Caco-2 (cell line): ENCODE measurements at regions of chr1 and their contacts with region 1.

Region 1: GRCh38 chr1:245396615-245397014 is 241.8 kb downstream of the KIF26B start:
- DNase-seq: no peak
- H3K4me3 ChIP-seq: no peak overlapping the region
- H3K4me3 Mint-ChIP-seq: no peak overlapping the region
- H3K27ac Mint-ChIP-seq: no peak overlapping the region
- H3K4me1 ChIP-seq: peaks cover 56% of the 10 kb centered on the region
- H3K4me1 Mint-ChIP-seq: peaks cover 33% of the 10 kb centered on the region
- H3K27me3 ChIP-seq: no peaks in the 10 kb centered on the region
- H3K27me3 Mint-ChIP-seq: no peaks in the 10 kb centered on the region
- CTCF ChIP-seq: no peak

Region 2: DNA sequence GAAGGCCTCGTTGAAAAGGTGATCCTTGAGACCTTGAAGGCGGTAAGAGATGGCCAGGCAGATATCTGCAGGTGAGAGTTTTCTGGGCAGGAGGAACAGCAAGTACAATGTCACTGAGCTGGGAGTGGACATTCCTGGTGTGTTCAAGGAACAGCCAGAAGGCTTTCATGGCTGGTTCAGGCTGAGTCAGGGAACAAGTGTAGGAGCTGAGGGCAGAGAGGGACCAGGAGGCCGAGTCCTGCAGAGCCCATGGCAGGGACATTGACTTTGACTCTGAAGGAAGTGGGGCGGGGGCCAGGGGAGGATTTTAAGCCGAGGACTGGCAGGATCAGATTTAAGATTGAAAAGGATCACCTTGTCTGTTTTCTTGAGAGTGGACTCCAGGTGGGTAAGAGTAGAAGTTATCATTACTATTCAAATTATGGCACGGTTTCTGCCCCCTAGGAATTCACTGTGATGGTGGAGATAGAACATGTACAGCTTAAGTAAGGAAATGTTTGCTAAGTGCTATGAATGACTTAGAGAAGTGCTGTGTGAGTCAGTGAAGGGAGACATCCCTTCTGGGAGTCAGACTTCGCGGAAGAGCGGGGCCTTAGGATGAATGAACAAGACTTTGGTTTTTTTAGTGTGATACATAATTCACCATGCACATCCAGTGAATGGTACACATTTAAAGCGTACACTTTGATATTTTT is 39.6 kb before region 1 on chr1:
- CTCF ChIA-PET with region 1: no interaction called
- POLR2A ChIA-PET with region 1: no interaction called
- intact Hi-C with region 1: no loop called
- DNase-seq: no peak
- H3K4me3 ChIP-seq: no peak overlapping the region
- H3K4me3 Mint-ChIP-seq: no peak overlapping the region
- H3K27ac Mint-ChIP-seq: no peak overlapping the region
- H3K4me1 ChIP-seq: no peaks in the 10 kb centered on the region
- H3K4me1 Mint-ChIP-seq: peaks cover 7% of the 10 kb centered on the region
- H3K27me3 ChIP-seq: no peaks in the 10 kb centered on the region
- H3K27me3 Mint-ChIP-seq: no peaks in the 10 kb centered on the region
- CTCF ChIP-seq: no peak

Region 3: GRCh38 chr1:245411245-245412036 is 14.8 kb after region 1 on chr1:
- CTCF ChIA-PET with region 1: no interaction called
- POLR2A ChIA-PET with region 1: no interaction called
- intact Hi-C with region 1: loop called (anchors 1 kb)
- DNase-seq: no peak
- H3K4me3 ChIP-seq: no peak overlapping the region
- H3K4me3 Mint-ChIP-seq: no peak overlapping the region
- H3K27ac Mint-ChIP-seq: peak overlapping the region; percentile 4
- H3K4me1 ChIP-seq: peaks cover 69% of the 10 kb centered on the region
- H3K4me1 Mint-ChIP-seq: peaks cover 49% of the 10 kb centered on the region
- H3K27me3 ChIP-seq: no peaks in the 10 kb centered on the region
- H3K27me3 Mint-ChIP-seq: no peaks in the 10 kb centered on the region
- CTCF ChIP-seq: no peak

Region 4: GRCh38 chr1:245441689-245442088 is 45.1 kb after region 1 on chr1:
- CTCF ChIA-PET with region 1: no interaction called
- POLR2A ChIA-PET with region 1: no interaction called
- intact Hi-C with region 1: no loop called
- DNase-seq: no peak
- H3K4me3 ChIP-seq: no peak overlapping the region
- H3K4me3 Mint-ChIP-seq: no peak overlapping the region
- H3K27ac Mint-ChIP-seq: no peak overlapping the region
- H3K4me1 ChIP-seq: no peaks in the 10 kb centered on the region
- H3K4me1 Mint-ChIP-seq: no peaks in the 10 kb centered on the region
- H3K27me3 ChIP-seq: no peaks in the 10 kb centered on the region
- H3K27me3 Mint-ChIP-seq: no peaks in the 10 kb centered on the region
- CTCF ChIP-seq: no peak

Region 5: DNA sequence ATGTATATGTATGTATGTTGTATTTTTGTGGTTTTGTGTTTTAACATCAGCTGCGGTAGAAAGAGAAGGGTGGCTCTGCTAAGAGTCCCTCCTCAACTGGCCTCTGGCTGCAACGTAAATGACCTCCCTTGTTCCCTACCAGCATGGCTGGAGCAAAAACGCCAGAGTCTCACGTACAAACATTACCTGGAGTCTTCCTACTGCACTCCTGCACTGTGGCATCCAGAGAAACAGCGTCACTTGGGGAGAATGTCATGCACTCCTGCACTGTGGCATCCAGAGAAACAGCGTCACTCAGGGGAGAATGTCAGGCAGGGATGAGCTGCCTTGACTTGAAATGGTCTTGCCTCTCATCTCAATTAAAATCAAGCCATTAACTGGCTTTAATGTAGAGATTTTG is 72.4 kb after region 1 on chr1:
- CTCF ChIA-PET with region 1: no interaction called
- POLR2A ChIA-PET with region 1: no interaction called
- intact Hi-C with region 1: loop called (anchors 1 kb)
- DNase-seq: no peak
- H3K4me3 ChIP-seq: no peak overlapping the region
- H3K4me3 Mint-ChIP-seq: no peak overlapping the region
- H3K27ac Mint-ChIP-seq: no peak overlapping the region
- H3K4me1 ChIP-seq: peaks cover 21% of the 10 kb centered on the region
- H3K4me1 Mint-ChIP-seq: peaks cover 34% of the 10 kb centered on the region
- H3K27me3 ChIP-seq: no peaks in the 10 kb centered on the region
- H3K27me3 Mint-ChIP-seq: no peaks in the 10 kb centered on the region
- CTCF ChIP-seq: no peak

Region 6: DNA sequence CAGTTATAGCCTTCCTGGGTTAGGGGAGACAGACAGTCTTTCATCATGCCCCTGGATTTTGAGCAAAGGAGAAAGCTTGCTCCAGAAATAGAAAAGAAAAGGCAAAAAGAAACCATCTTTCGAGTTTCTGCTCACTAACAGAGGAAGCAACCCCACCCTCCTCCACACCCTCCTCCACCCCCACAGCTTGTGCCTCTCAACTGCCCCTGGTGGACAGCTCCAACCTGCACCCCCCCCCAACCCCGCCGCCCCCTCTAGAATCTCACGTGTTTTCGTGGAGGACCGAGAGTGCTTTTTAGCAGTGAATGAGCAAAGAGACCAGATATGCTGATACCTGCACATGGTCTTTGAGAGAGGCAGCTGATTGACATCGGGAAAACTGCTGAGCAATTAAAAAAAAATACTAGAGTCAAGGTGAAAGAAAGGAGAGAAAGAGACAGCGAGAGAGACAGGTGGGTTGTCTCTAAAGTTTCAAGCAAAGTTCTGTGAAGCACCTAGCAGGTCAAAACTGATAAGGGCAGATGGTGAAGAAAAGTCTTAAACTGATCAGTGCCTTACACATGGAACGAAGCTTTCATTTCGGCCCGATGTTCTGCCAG is 116.5 kb after region 1 on chr1:
- CTCF ChIA-PET with region 1: no interaction called
- POLR2A ChIA-PET with region 1: no interaction called
- intact Hi-C with region 1: loop called (anchors 5 kb)
- DNase-seq: peak in 1 of 2 experiments; percentile 8
- H3K4me3 ChIP-seq: no peak overlapping the region
- H3K4me3 Mint-ChIP-seq: no peak overlapping the region
- H3K27ac Mint-ChIP-seq: no peak overlapping the region
- H3K4me1 ChIP-seq: no peaks in the 10 kb centered on the region
- H3K4me1 Mint-ChIP-seq: peaks cover 16% of the 10 kb centered on the region
- H3K27me3 ChIP-seq: no peaks in the 10 kb centered on the region
- H3K27me3 Mint-ChIP-seq: no peaks in the 10 kb centered on the region
- CTCF ChIP-seq: no peak

Region 7: DNA sequence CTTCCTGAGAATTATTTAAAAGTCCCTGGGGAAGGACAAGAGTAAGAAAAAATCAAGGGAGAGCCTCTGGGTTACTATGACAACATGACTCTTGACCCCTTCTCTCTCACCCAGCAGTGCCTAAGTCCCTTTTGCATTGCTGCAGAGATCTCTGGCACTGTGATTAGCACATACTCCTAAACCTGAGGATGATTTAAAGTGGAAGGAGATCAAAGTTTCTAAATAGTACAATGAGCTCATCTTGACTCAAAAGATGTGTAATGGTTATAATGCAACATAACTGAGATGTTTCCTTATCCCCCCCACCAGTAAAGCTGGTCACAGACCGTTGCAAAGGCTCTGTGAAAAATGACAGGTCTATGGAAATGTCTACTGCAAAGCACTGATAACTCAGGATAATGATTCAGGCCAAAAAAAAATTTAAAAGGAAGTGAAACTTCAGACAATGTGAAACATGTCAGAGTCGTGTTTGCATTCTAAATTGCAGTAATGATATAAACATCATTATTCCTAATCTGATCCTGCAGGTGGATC is 277.3 kb after region 1 on chr1:
- CTCF ChIA-PET with region 1: no interaction called
- POLR2A ChIA-PET with region 1: no interaction called
- intact Hi-C with region 1: no loop called
- DNase-seq: peak in 1 of 2 experiments; percentile 4
- H3K4me3 ChIP-seq: no peak overlapping the region
- H3K4me3 Mint-ChIP-seq: no peak overlapping the region
- H3K27ac Mint-ChIP-seq: peak overlapping the region; percentile 32
- H3K4me1 ChIP-seq: no peaks in the 10 kb centered on the region
- H3K4me1 Mint-ChIP-seq: peaks cover 6% of the 10 kb centered on the region
- H3K27me3 ChIP-seq: no peaks in the 10 kb centered on the region
- H3K27me3 Mint-ChIP-seq: no peaks in the 10 kb centered on the region
- CTCF ChIP-seq: no peak

Region 8: GRCh38 chr1:245807306-245807705 is 410.7 kb after region 1 on chr1:
- CTCF ChIA-PET with region 1: no interaction called
- POLR2A ChIA-PET with region 1: no interaction called
- intact Hi-C with region 1: loop called (anchors 5 kb)
- DNase-seq: no peak
- H3K4me3 ChIP-seq: no peak overlapping the region
- H3K4me3 Mint-ChIP-seq: no peak overlapping the region
- H3K27ac Mint-ChIP-seq: no peak overlapping the region
- H3K4me1 ChIP-seq: peaks cover 40% of the 10 kb centered on the region
- H3K4me1 Mint-ChIP-seq: peaks cover 30% of the 10 kb centered on the region
- H3K27me3 ChIP-seq: no peaks in the 10 kb centered on the region
- H3K27me3 Mint-ChIP-seq: no peaks in the 10 kb centered on the region
- CTCF ChIP-seq: no peak